PC-9 (cell line): ENCODE measurements at regions of chr6 and their contacts with region 1.

Region 1: GRCh38 chr6:24431045-24431451 is 28.3 kb downstream of the MRS2 start:
- DNase-seq: peak in 1 of 2 experiments; percentile 32
- H3K4me3 ChIP-seq: no peak overlapping the region
- H3K27ac ChIP-seq: no peak overlapping the region
- H3K4me1 ChIP-seq: peaks cover 20% of the 10 kb centered on the region
- H3K27me3 ChIP-seq: no peaks in the 10 kb centered on the region
- CTCF ChIP-seq: peak; percentile 88

Region 2: GRCh38 chr6:24494821-24495795 is 64.1 kb after region 1 on chr6 and contains the start of gene ALDH5A1:
- CTCF ChIA-PET with region 1: no interaction called
- POLR2A ChIA-PET with region 1: interaction called, 6 read pairs
- intact Hi-C with region 1: loop called (anchors 2 kb)
- DNase-seq: peak; percentile 35 to 56
- H3K4me3 ChIP-seq: peak within 1 kb of the TSS; percentile 92
- H3K27ac ChIP-seq: no peak within 1 kb of the TSS
- H3K4me1 ChIP-seq: peaks cover 25% of the 10 kb centered on the region
- H3K27me3 ChIP-seq: no peaks in the 10 kb centered on the region
- CTCF ChIP-seq: no peak; the same call in 1 of the 2 replicates
- total RNA-seq, gene ALDH5A1: 19.1 and 21.2 TPM in 2 replicates

Region 3: DNA sequence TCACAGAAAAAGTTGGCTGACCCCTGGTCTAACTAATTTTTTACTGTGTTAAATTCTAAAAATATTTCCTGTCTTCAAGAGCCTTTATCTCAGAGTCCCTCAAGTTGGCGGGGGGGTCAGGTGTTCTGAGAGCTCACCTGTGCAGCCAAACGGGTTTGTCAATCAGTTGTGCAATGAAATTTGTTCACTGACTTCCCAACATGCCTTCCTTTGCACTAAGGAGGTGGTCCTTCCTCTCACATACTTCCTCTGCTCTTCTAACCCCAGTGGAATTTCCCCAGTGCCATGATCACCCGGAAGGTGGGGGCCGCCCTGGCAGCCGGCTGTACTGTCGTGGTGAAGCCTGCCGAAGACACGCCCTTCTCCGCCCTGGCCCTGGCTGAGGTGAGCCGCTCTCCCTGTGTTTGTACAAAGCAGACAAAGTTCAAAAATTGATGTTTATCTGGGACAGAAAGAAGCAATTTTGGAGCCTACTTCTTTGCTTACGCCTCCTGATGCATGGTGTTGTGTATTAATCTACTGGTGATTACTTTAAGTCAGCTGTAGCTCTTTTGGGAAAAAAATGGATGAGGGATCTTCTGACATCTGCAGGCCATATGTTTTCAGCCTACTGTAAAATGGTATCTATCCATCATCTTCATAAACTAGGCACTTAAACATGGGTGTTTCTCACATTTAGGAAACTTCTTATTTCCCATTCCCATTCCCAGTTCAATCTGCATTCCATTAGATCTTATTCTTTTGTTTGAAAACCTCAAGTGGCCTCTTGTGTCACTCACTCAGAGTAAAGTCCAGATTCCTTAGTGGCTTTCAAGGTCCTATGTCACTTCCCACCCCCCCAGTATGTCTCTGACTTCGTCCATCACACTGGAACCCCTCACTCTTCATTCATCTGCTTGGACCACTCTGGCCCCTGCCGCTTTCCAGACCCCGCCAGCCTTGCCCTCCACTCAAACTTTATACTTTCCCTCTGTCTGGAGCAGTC is 73.8 kb after region 1 on chr6:
- CTCF ChIA-PET with region 1: no interaction called
- POLR2A ChIA-PET with region 1: interaction called, 6 read pairs
- intact Hi-C with region 1: loop called (anchors 1 kb)
- DNase-seq: peak; percentile 84 to 99
- H3K4me3 ChIP-seq: peak overlapping the region; percentile 38; the same call in 1 of the 2 replicates
- H3K27ac ChIP-seq: peak overlapping the region; percentile 74
- H3K4me1 ChIP-seq: peaks cover 28% of the 10 kb centered on the region
- H3K27me3 ChIP-seq: no peaks in the 10 kb centered on the region
- CTCF ChIP-seq: no peak

Region 4: GRCh38 chr6:24520929-24521546 is 90.0 kb after region 1 on chr6:
- CTCF ChIA-PET with region 1: interaction called, 9 read pairs
- POLR2A ChIA-PET with region 1: no interaction called
- intact Hi-C with region 1: loop called (anchors 1 kb)
- DNase-seq: peak in 1 of 2 experiments; percentile 55
- H3K4me3 ChIP-seq: no peak overlapping the region
- H3K27ac ChIP-seq: no peak overlapping the region
- H3K4me1 ChIP-seq: no peaks in the 10 kb centered on the region
- H3K27me3 ChIP-seq: no peaks in the 10 kb centered on the region
- CTCF ChIP-seq: peak; percentile 72

Region 5: GRCh38 chr6:24689964-24690363 is 258.9 kb after region 1 on chr6:
- CTCF ChIA-PET with region 1: no interaction called
- POLR2A ChIA-PET with region 1: no interaction called
- intact Hi-C with region 1: loop called (anchors 2 kb)
- DNase-seq: no peak
- H3K4me3 ChIP-seq: no peak overlapping the region
- H3K27ac ChIP-seq: no peak overlapping the region
- H3K4me1 ChIP-seq: peaks cover 11% of the 10 kb centered on the region
- H3K27me3 ChIP-seq: no peaks in the 10 kb centered on the region
- CTCF ChIP-seq: no peak

Region 6: GRCh38 chr6:24910961-24911712 is 480.1 kb after region 1 on chr6:
- CTCF ChIA-PET with region 1: no interaction called
- POLR2A ChIA-PET with region 1: no interaction called
- intact Hi-C with region 1: no loop called
- DNase-seq: peak in 1 of 2 experiments; percentile 28
- H3K4me3 ChIP-seq: peak overlapping the region; percentile 42; the same call in 1 of the 2 replicates
- H3K27ac ChIP-seq: no peak overlapping the region
- H3K4me1 ChIP-seq: peaks cover 15% of the 10 kb centered on the region; the same call in 1 of the 2 replicates
- H3K27me3 ChIP-seq: peaks cover 21% of the 10 kb centered on the region
- CTCF ChIP-seq: no peak